AG04449 (cell line): ENCODE measurements at regions of chr10 and their contacts with region 1.

Region 1: GRCh38 chr10:104353325-104354048 is at the start of gene CFAP58:
- DNase-seq: no peak
- H3K4me3 ChIP-seq: peak within 1 kb of the TSS; percentile 63
- CTCF ChIP-seq: peak; percentile 76

Region 2: GRCh38 chr10:104260775-104261115 is 92.7 kb before region 1 on chr10:
- CTCF ChIA-PET with region 1: interaction called, 14 read pairs
- POLR2A ChIA-PET with region 1: no interaction called
- DNase-seq: no peak
- H3K4me3 ChIP-seq: no peak overlapping the region
- CTCF ChIP-seq: no peak

Region 3: GRCh38 chr10:104300736-104301292 is 52.7 kb before region 1 on chr10:
- CTCF ChIA-PET with region 1: interaction called, 659 read pairs
- POLR2A ChIA-PET with region 1: interaction called, 4 read pairs
- DNase-seq: peak; percentile 93
- H3K4me3 ChIP-seq: peak overlapping the region; percentile 43
- CTCF ChIP-seq: no peak

Region 4: DNA sequence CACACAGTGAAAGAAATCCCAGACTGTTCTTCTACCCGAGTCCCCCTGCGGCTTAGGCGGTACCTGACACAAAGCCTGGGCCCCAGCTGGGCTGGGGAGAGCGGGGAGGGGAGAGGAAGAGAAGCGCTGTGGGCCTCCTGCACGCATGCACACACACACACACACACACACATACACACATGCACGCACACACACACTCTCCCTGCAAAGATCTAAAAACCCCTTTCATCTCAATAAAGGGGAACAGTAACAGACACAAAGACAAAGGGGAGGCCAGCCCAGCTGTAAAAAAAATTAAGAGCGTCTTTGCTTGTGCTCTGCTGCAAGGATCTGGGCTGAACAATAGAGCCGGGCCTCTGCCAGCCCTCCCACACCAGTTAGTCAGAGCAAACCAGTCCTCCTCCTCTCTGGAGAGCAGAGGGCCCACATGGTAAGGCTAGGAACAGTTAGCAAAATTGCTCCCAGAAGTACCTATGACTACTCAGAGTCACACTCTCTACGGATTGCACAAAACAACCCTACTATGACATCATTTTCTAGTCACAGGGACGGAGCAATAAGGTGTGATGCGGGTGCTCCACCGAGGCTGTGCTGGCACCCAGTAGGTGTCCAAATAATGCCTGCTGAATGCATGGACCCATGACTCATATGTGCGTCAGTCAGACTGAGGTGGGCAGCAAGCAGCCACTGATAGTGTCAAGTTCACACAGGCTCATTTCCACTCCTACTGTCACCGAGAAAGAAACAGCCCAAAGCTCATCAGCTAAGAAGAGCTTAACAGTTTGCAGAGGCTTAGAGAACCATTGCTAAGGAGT is 24.4 kb before region 1 on chr10:
- CTCF ChIA-PET with region 1: interaction called, 62 read pairs
- POLR2A ChIA-PET with region 1: interaction called, 3 read pairs
- DNase-seq: no peak
- H3K4me3 ChIP-seq: peak overlapping the region; percentile 47
- CTCF ChIP-seq: no peak

Region 5: GRCh38 chr10:104368381-104368780 is 14.9 kb after region 1 on chr10:
- CTCF ChIA-PET with region 1: interaction called, 10 read pairs
- POLR2A ChIA-PET with region 1: no interaction called
- DNase-seq: no peak
- H3K4me3 ChIP-seq: no peak overlapping the region
- CTCF ChIP-seq: no peak